Lower leg skin (tissue), 4 donors: ENCODE measurements at regions of chr7 and their contacts with region 1.

Region 1: GRCh38 chr7:35707422-35707821 is 12.5 kb upstream of the HERPUD2 start:
- DNase-seq: no peak
- H3K4me3 ChIP-seq: no peak overlapping the region
- CTCF ChIP-seq: no peak
- POLR2A ChIP-seq: no peak

Region 2: GRCh38 chr7:35761871-35762677 is 54.7 kb after region 1 on chr7:
- intact Hi-C with region 1: loop called (anchors 2 kb)
- DNase-seq: no peak
- H3K4me3 ChIP-seq: no peak overlapping the region
- CTCF ChIP-seq: no peak
- POLR2A ChIP-seq: no peak

Region 3: GRCh38 chr7:35906191-35906908 is 198.9 kb after region 1 on chr7:
- intact Hi-C with region 1: loop called (anchors 2 kb)
- DNase-seq: peak in 1 of 2 donors; percentile 71
- H3K4me3 ChIP-seq: no peak overlapping the region
- CTCF ChIP-seq: peak in 1 of 3 donors; percentile 88
- POLR2A ChIP-seq: no peak